Tibial artery (tissue), 4 donors: ENCODE measurements at regions of chr12 and their contacts with region 1.

Region 1: GRCh38 chr12:54191550-54192022 is 2.8 kb upstream of the SMUG1 start:
- DNase-seq: peak; percentile 82 to 89
- H3K4me3 ChIP-seq: no peak overlapping the region
- H3K27ac ChIP-seq: no peak overlapping the region
- H3K4me1 ChIP-seq: peaks cover 0 to 20% (median 10%) of the 10 kb centered on the region in 4 donors
- H3K27me3 ChIP-seq: peaks cover 0 to 10% of the 10 kb centered on the region in 2 donors
- CTCF ChIP-seq: peak; percentile 79 to 83

Region 2: GRCh38 chr12:54005853-54006686 is 185.5 kb before region 1 on chr12:
- intact Hi-C with region 1: loop called (anchors 5 kb)
- DNase-seq: peak; percentile 91
- H3K4me3 ChIP-seq: peak overlapping the region; percentile 37 to 64
- H3K27ac ChIP-seq: peak overlapping the region; percentile 66 to 93
- H3K4me1 ChIP-seq: peaks cover 0 to 89% (median 62%) of the 10 kb centered on the region in 4 donors
- H3K27me3 ChIP-seq: no peaks in the 10 kb centered on the region
- CTCF ChIP-seq: peak; percentile 90 to 98

Region 3: DNA sequence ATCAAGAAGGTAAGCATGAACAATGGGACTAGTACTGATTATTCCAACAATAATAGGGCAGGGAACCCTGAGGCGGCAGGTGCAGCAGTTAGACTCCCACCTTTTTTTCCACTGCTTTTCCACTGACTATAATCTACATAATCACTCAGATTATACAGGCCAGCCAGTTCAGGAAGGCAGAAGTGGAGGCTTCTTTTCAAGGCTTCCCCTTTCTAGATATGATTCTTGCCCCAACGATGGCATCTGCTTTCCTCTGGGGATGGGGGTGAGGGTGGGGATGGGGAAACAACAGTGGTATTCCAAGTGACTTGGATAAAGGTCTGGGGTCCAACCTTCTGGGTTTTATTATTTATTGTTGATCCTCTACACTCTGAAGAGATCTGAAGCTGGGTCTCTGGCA is 306.3 kb after region 1 on chr12:
- intact Hi-C with region 1: no loop called
- DNase-seq: no peak
- H3K4me3 ChIP-seq: peak overlapping the region; percentile 23 to 37
- H3K27ac ChIP-seq: no peak overlapping the region
- H3K4me1 ChIP-seq: no peaks in the 10 kb centered on the region
- H3K27me3 ChIP-seq: no peaks in the 10 kb centered on the region
- CTCF ChIP-seq: no peak